BJ (cell line): ENCODE measurements at regions of chr16 and their contacts with region 1.

Region 1: GRCh38 chr16:28277537-28278388 is 14.6 kb upstream of the SBK1 start:
- DNase-seq: no peak
- H3K4me3 ChIP-seq: peak overlapping the region; percentile 51
- H3K27me3 ChIP-seq: peaks cover 4% of the 10 kb centered on the region
- CTCF ChIP-seq: peak; percentile 94

Region 2: GRCh38 chr16:28117168-28117565 is 160.6 kb before region 1 on chr16:
- CTCF ChIA-PET with region 1: no interaction called
- POLR2A ChIA-PET with region 1: no interaction called
- DNase-seq: no peak
- H3K4me3 ChIP-seq: no peak overlapping the region
- H3K27me3 ChIP-seq: no peaks in the 10 kb centered on the region
- CTCF ChIP-seq: no peak

Region 3: GRCh38 chr16:28264656-28265055 is 13.1 kb before region 1 on chr16:
- CTCF ChIA-PET with region 1: interaction called, 20 read pairs
- POLR2A ChIA-PET with region 1: no interaction called
- DNase-seq: no peak
- H3K4me3 ChIP-seq: no peak overlapping the region
- H3K27me3 ChIP-seq: peaks cover 21% of the 10 kb centered on the region
- CTCF ChIP-seq: no peak